ENCODE measurements at regions of chr5 and their contacts with region 1.

Region 1: DNA sequence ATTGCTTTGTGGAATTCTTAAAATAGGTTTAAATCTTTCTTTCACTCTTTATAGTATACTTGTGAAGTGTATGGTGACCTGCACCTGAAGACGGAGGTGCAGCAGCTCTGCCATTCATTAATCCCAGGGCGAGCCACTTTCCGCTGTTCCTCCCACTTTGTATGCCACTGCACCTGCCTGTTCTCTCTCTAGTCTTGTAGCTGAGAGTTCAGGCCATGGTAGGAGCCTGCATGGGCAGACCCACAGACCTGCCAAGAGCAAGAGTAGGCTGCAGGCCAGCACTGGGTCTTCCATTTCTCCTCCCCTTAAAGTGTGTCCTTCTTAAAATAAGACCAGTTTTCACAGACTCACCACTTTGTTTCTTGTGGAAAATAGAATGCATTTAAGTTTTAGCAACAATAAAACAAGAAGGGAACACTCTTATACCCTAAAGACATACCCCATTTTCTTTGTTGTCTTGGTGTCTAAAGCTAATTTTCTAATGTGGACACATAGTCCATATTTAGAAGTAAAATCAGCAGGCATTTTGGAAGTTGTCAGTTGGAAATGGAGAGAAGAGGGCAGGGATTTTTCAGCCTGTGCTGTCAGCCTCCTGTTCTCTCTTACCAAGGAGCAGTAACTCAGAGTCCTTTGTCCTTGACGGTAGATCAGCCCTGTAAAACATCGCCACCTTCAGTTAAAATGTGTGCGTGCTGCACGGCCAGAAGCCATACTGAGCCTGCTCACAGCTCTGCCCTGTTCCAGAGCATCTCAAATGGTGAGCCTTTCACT is 103.2 kb downstream of the SNCAIP start:
- DNase-seq: peak; percentile 4 to 51
- ATAC-seq: peak; percentile 98
- H3K4me3 ChIP-seq: no peak overlapping the region
- H3K27ac ChIP-seq: no peak overlapping the region
- H3K4me1 ChIP-seq: no peaks in the 10 kb centered on the region
- CTCF ChIP-seq: peak; percentile 40
- EP300 ChIP-seq: no peak
- POLR2A ChIP-seq: no peak
- RAD21 ChIP-seq: peak; percentile 43 to 64; a peak in 4 of 5 replicates

Region 2: DNA sequence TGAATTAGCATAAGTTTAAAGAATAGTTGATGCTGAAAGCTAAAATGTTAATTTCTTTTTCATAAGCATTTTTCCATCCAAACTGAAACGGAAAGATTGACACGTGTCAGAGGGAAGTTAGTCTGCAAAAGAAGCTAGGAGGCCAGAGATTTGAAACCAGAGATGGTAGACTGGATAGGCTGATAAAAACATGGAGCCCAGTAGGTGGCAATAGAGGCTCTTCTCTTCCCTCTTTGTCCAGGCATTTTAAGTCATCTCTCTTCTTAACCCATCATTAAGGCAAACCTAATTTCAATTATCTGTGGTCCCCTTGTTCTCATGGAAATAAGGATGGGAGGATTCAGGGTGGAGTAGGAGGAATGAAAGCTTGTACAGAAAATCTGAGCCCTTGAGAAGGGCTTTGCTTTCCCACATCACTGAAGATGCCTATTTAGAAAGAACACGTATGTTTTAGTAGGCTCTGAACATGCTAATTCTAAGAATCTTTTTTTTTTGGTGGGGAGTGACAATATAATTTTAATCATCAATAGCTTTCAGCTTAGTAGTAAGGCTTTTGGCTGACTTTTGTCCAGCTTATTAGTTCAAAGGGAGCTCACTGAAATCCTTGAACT is 219.3 kb before region 1 on chr5:
- CTCF ChIA-PET with region 1: interaction called, 10 read pairs
- POLR2A ChIA-PET with region 1: no interaction called
- DNase-seq: peak; percentile 19 to 46
- ATAC-seq: peak; percentile 71 to 88; a peak in 3 of 6 replicates
- H3K4me3 ChIP-seq: no peak overlapping the region
- H3K27ac ChIP-seq: no peak overlapping the region
- H3K4me1 ChIP-seq: no peaks in the 10 kb centered on the region
- CTCF ChIP-seq: peak; percentile 62
- EP300 ChIP-seq: no peak
- POLR2A ChIP-seq: no peak
- RAD21 ChIP-seq: peak; percentile 63 to 66

Region 3: DNA sequence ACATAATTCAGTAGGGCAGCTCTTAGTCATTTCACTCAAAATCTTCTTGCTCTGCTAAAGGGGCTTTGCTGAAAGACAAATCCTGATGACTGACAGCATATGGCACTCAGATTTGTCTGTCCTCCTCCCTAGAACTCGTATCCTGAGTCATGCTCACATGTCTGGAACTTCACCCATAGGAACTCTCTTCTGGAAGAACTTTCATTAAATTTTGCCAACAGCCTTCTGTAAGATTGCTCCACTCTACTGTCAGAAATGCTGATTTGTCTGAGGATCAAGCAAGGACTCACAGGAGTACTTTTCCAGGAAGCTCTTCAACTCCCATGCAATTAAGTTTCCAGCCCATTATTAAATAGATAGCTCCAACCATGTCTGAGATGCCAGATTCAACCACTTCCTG is 299.9 kb after region 1 on chr5:
- CTCF ChIA-PET with region 1: no interaction called
- POLR2A ChIA-PET with region 1: no interaction called
- DNase-seq: peak in 1 of 2 experiments; percentile 7
- ATAC-seq: peak in 1 of 2 experiments; percentile 20; a peak in 1 of 6 replicates
- H3K4me3 ChIP-seq: no peak overlapping the region
- H3K27ac ChIP-seq: no peak overlapping the region
- H3K4me1 ChIP-seq: no peaks in the 10 kb centered on the region
- CTCF ChIP-seq: no peak
- EP300 ChIP-seq: no peak
- POLR2A ChIP-seq: no peak
- RAD21 ChIP-seq: no peak